ENCODE measurements at regions of chr1 and their contacts with region 1.

Region 1: GRCh38 chr1:204726478-204726877 is 40.9 kb upstream of the LRRN2 start:
- DNase-seq: no peak
- ATAC-seq: no peak
- H3K4me3 Mint-ChIP-seq: no peak overlapping the region
- H3K27ac Mint-ChIP-seq: no peak overlapping the region
- H3K4me1 Mint-ChIP-seq: peaks cover 23% of the 10 kb centered on the region
- H3K27me3 Mint-ChIP-seq: peaks cover 64% of the 10 kb centered on the region
- CTCF ChIP-seq: no peak

Region 2: DNA sequence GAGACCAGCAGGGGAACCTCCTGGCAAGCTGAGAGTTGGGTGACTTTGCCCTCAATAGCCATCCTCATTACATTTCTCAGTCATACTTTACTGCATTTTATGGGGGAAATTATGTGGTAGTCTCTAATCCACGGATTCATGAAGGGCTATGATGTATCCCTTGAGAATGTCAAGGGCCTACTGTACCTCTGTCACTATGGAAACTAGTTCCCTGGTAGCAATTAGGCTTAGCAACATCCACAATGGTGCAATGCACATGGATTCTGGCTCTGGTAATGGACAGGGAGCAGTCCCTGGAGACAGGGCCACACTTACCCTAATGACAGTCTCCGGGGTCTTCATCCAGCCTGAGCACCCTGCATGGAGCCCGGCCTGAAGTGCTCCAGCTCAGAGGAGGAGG is 67.4 kb before region 1 on chr1:
- CTCF ChIA-PET with region 1: no interaction called
- POLR2A ChIA-PET with region 1: no interaction called
- DNase-seq: no peak
- ATAC-seq: no peak
- H3K4me3 Mint-ChIP-seq: no peak overlapping the region
- H3K27ac Mint-ChIP-seq: 0 out of 2 replicates have a peak overlapping the region, but pooled peaks have one; percentile 18
- H3K4me1 Mint-ChIP-seq: peaks cover 7% of the 10 kb centered on the region
- H3K27me3 Mint-ChIP-seq: peaks cover 4% of the 10 kb centered on the region; the same call in 1 of the 2 replicates
- CTCF ChIP-seq: no peak

Region 3: DNA sequence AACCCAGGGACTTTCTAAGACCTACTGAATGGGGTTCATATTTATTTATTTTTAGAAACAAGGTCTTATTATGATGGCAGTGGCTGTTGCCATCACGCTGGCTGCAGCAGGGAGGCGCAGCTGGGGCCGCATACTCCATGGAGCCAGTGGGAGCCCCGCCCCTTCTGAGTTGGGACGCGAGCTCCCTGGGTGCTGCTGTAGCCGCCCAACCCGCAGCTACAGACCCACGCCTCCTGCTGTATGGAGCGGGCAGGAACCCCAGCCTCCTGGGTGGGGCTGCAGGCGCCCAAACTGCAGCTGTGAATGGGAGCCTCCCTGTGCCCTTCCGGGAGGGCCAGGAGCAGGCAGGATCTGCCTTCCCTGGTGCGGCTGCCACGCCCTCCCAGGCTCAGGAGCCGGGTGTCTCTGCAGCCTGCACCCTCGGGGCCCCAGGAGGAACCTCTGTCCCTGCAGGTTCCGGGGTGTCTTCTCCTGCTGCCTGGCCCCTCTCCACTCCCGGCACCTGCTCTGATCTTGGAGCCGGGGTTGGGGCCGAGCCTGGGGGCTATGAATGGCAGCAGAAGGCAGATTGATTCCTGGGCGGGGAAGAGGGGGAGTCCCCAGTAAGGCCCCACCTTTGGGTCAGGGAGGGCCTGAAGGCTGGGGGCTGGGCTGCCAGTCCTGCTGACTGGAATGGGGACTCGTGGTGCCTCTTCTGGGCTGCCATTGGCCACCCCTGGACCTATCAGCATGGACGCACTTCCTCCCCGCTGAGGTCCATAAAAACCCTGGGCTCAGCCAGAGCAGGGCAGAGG is 25.6 kb after region 1 on chr1:
- CTCF ChIA-PET with region 1: interaction called, 23 read pairs
- POLR2A ChIA-PET with region 1: no interaction called
- DNase-seq: peak; percentile 73
- ATAC-seq: peak; percentile 85
- H3K4me3 Mint-ChIP-seq: 0 out of 2 replicates have a peak overlapping the region, but pooled peaks have one; percentile 25
- H3K27ac Mint-ChIP-seq: no peak overlapping the region
- H3K4me1 Mint-ChIP-seq: peaks cover 24% of the 10 kb centered on the region
- H3K27me3 Mint-ChIP-seq: peaks cover 12% of the 10 kb centered on the region
- CTCF ChIP-seq: no peak